ENCODE measurements at regions of chr5 and their contacts with region 1.

Region 1: GRCh38 chr5:139273572-139274289 is 19.8 kb upstream of the MATR3 start:
- DNase-seq: peak; percentile 86 to 92 (median 90)
- H3K4me3 ChIP-seq: peak overlapping the region; percentile 40 to 97 (median 69)
- H3K27ac ChIP-seq: peak overlapping the region; percentile 27 to 80
- H3K4me1 ChIP-seq: peaks cover 17 to 73% (median 66%) of the 10 kb centered on the region in 4 experiments
- H3K27me3 ChIP-seq: no peaks in the 10 kb centered on the region

Region 2: GRCh38 chr5:137933491-137933911 is 1340.2 kb before region 1 on chr5:
- CTCF ChIA-PET with region 1: no interaction called
- POLR2A ChIA-PET with region 1: no interaction called
- DNase-seq: no peak
- H3K4me3 ChIP-seq: no peak overlapping the region
- H3K27ac ChIP-seq: no peak overlapping the region
- H3K4me1 ChIP-seq: no peaks in the 10 kb centered on the region
- H3K27me3 ChIP-seq: no peaks in the 10 kb centered on the region

Region 3: DNA sequence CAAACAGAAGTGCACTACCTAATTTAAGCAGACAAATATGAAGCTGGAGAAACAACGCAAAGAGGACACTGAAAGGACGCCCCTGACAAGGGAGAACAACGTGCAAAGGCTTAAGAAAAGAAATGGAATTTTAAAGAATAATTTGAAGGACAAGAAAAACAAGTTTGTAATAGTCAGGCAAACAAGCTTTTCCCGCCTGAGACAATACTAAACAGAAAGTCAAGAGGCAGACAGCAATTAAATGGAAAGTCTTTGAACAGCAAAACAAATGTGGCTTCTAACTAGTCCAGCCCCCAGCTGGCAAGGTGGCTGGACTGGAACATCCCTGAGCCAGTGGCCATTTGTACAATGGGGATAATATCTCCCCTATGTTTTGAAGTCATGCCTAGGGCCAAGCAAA is 138.8 kb before region 1 on chr5:
- CTCF ChIA-PET with region 1: no interaction called
- POLR2A ChIA-PET with region 1: no interaction called
- DNase-seq: no peak
- H3K4me3 ChIP-seq: no peak overlapping the region
- H3K27ac ChIP-seq: no peak overlapping the region
- H3K4me1 ChIP-seq: peaks cover 0 to 42% (median 32%) of the 10 kb centered on the region in 4 experiments
- H3K27me3 ChIP-seq: no peaks in the 10 kb centered on the region

Region 4: GRCh38 chr5:139287890-139288635 is 14.3 kb after region 1 on chr5:
- CTCF ChIA-PET with region 1: interaction called, 21 read pairs
- POLR2A ChIA-PET with region 1: interaction called, 3 read pairs
- DNase-seq: peak; percentile 56 to 79 (median 74)
- H3K4me3 ChIP-seq: no peak overlapping the region
- H3K27ac ChIP-seq: no peak overlapping the region
- H3K4me1 ChIP-seq: peaks cover 0 to 3% (median 1%) of the 10 kb centered on the region in 4 experiments
- H3K27me3 ChIP-seq: no peaks in the 10 kb centered on the region

Measured in common myeloid progenitor, CD34-positive (primary cell).